ENCODE measurements at regions of chr13 and their contacts with region 1.

Region 1: GRCh38 chr13:93328943-93329342 is 102.3 kb downstream of the GPC6 start:
- DNase-seq: no peak
- ATAC-seq: no peak
- H3K4me3 ChIP-seq: no peak overlapping the region
- H3K27ac ChIP-seq: no peak overlapping the region
- H3K4me1 ChIP-seq: no peaks in the 10 kb centered on the region
- H3K27me3 ChIP-seq: no peaks in the 10 kb centered on the region
- CTCF ChIP-seq: no peak
- EP300 ChIP-seq: no peak
- POLR2A ChIP-seq: no peak
- RAD21 ChIP-seq: no peak

Region 2: DNA sequence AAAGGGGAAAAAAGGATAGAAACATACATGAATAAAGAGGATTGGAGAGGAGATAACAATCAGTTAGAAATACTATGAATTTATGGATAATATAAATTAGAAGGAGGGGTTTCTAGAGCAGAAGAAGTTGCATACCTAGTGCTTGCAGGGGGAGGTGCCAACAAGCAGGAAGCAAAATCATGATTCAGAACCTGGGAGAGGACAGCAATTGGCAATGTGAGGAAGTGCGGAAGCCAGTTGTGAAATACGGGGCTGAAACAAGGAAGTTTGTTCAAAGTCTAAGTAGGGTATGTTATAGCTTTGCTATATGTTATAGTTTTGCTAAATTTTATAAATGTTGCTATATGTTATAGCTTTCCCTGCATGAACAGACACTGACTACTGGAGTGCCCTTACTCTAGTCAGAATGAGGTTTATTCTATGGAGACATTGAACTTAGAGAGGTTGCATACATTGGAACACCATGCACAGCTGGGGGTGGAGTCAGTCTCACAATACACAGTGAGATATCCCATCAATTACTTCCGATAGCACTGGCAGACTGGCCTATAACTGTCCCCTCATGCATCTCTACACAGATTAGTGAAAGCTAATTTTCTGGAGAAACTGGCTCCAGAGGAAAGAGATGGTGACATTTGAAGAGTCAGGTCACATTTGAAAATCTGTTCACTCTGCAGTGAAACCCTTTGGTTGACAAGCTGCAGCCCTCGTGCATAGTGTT is 10.2 kb before region 1 on chr13:
- CTCF ChIA-PET with region 1: no interaction called
- POLR2A ChIA-PET with region 1: interaction called, 10 read pairs
- in situ Hi-C with region 1: no loop called
- intact Hi-C with region 1: no loop called
- DNase-seq: no peak
- ATAC-seq: peak; percentile 47
- H3K4me3 ChIP-seq: no peak overlapping the region
- H3K27ac ChIP-seq: no peak overlapping the region
- H3K4me1 ChIP-seq: no peaks in the 10 kb centered on the region; a peak in 1 of 5 replicates
- H3K27me3 ChIP-seq: no peaks in the 10 kb centered on the region
- CTCF ChIP-seq: no peak
- EP300 ChIP-seq: no peak
- POLR2A ChIP-seq: no peak
- RAD21 ChIP-seq: no peak

Measured in K562 (cell line).